ENCODE measurements at regions of chr11 and their contacts with region 1.

Region 1: DNA sequence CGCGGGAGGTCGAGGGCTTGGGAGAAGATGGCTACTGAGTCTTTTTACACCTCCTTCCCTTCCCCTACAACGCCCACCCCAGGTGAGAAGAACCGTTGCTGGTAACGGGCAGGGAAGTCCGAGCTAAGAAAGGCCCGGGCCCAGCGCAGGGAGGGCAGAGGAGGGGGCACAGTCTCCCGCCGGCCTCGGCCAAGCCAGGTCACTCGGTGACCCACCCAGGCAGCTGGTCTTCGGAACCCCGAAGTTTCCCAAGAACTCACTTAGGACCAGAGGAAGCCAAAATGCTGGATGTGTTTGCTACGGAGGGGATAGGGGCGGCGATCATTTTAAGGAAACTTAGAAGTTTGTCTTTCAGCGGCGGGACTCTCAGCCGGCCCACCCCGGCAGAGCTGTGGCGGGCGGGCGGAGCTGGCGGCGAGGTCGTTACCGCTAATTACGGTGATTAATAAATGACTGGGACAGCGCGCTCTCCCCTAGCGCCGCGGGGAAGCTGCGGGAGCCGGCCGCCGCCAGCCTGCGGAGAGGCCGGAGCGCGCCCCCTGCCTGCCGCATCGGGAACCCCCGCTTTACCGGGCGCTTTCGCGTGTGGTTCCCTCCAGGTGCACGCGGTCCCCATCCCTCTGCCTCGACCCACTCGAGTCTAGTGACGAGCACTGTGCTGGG is 820 bp downstream of the ROBO3 start:
- DNase-seq: peak; percentile 42 to 68 (median 62)
- H3K4me3 ChIP-seq: peak overlapping the region in 4 of 7 experiments; percentile 23 to 61 (median 56)
- H3K27ac ChIP-seq: no peak overlapping the region
- H3K4me1 ChIP-seq: peaks cover 0 to 35% (median 20%) of the 10 kb centered on the region in 4 experiments
- H3K27me3 ChIP-seq: peaks cover 8 to 100% (median 82%) of the 10 kb centered on the region in 5 experiments

Region 2: DNA sequence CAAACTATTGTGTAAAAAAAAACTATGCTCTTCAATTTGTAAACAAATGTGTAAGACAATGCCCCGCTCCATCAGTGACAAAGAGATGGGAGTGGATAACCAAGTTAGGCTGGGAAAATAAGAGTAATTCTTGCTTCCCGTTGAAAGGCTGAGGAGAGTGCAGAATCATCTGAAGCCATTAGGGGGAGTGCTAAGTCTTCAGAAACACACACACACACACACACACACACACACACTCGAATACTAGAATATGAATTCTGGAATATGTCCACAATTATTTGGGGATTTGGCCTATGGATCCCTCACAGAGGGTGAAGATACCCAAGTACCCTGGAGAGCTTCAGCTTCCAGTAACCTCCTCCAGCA is 28.6 kb before region 1 on chr11:
- CTCF ChIA-PET with region 1: interaction called, 42 read pairs
- POLR2A ChIA-PET with region 1: no interaction called
- DNase-seq: peak; percentile 83 to 87 (median 85)
- H3K4me3 ChIP-seq: no peak overlapping the region
- H3K27ac ChIP-seq: no peak overlapping the region
- H3K4me1 ChIP-seq: peaks cover 0 to 21% (median 16%) of the 10 kb centered on the region in 4 experiments
- H3K27me3 ChIP-seq: peaks cover 30 to 52% (median 37%) of the 10 kb centered on the region in 5 experiments

Region 3: DNA sequence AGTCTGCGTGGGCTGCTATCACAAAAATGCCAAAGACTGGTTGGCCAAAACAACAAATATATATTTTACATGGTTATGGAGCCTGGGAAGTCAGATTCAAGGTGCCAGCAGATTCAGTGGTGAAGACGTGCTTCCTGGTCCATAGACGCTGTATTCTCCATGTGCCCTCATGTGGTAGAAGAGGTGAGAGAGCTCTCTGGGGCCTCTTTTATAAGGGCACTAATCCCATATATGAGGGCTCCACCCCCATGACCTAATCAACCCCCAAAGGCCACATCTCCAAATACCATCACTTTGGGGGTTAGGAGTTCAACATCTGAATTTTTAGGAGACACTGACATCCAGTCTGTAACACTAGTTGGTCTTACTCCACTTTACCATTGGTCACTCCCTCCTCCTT is 10.6 kb before region 1 on chr11:
- CTCF ChIA-PET with region 1: interaction called, 10 read pairs
- POLR2A ChIA-PET with region 1: interaction called, 3 read pairs
- DNase-seq: no peak
- H3K4me3 ChIP-seq: no peak overlapping the region
- H3K27ac ChIP-seq: no peak overlapping the region
- H3K4me1 ChIP-seq: no peaks in the 10 kb centered on the region
- H3K27me3 ChIP-seq: peaks cover 12 to 66% (median 35%) of the 10 kb centered on the region in 5 experiments

Region 4: GRCh38 chr11:124882339-124883071 is 16.5 kb after region 1 on chr11:
- CTCF ChIA-PET with region 1: interaction called, 11 read pairs
- POLR2A ChIA-PET with region 1: no interaction called
- DNase-seq: no peak
- H3K4me3 ChIP-seq: no peak overlapping the region
- H3K27ac ChIP-seq: no peak overlapping the region
- H3K4me1 ChIP-seq: peaks cover 0 to 38% (median 25%) of the 10 kb centered on the region in 4 experiments
- H3K27me3 ChIP-seq: no peaks in the 10 kb centered on the region

Measured in common myeloid progenitor, CD34-positive (primary cell).